ENCODE measurements at regions of chr2 and their contacts with region 1.

Region 1: GRCh38 chr2:32063310-32064161 is at the start of gene SPAST:
- DNase-seq: peak; percentile 96
- ATAC-seq: peak; percentile 95
- H3K4me3 Mint-ChIP-seq: peak within 1 kb of the TSS; percentile 98
- H3K27ac Mint-ChIP-seq: peak within 1 kb of the TSS; percentile 92
- H3K4me1 Mint-ChIP-seq: peaks cover 22% of the 10 kb centered on the region
- H3K27me3 Mint-ChIP-seq: peaks cover 4% of the 10 kb centered on the region
- total RNA-seq, gene SPAST: 18.8 to 19.2 TPM

Region 2: GRCh38 chr2:32039447-32040219 is 23.9 kb before region 1 on chr2 and contains the start of gene DPY30:
- POLR2A ChIA-PET with region 1: interaction called, 50 read pairs
- DNase-seq: peak; percentile 92
- ATAC-seq: peak; percentile 94
- H3K4me3 Mint-ChIP-seq: peak within 1 kb of the TSS; percentile 94
- H3K27ac Mint-ChIP-seq: peak within 1 kb of the TSS; percentile 96
- H3K4me1 Mint-ChIP-seq: peaks cover 10% of the 10 kb centered on the region
- H3K27me3 Mint-ChIP-seq: no peaks in the 10 kb centered on the region
- total RNA-seq, gene DPY30: 57.8 to 66.7 TPM

Region 3: DNA sequence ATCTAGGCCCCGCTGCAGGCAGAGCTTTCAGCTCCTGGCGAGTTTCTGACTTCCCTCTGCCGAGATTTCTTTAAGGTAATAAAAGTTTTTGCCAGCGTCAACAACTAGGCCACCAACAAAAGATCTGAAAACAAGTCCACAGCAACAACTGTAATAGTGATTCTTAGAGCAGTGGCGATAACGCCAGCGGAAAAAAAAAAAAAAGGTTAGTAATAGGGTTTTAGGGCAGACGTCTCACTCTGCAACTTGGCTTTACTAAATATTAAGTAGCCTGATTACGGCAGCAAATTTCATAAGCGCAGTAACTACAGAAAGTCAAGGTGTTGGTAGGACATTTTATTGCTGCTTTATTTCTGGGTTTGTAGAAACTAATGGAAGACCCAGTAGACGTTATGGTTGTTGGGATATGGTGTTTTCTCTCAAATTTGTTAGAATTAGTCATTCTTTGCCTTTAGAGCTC is 102.6 kb after region 1 on chr2:
- POLR2A ChIA-PET with region 1: interaction called, 18 read pairs
- DNase-seq: no peak
- ATAC-seq: no peak
- H3K4me3 Mint-ChIP-seq: peak overlapping the region; percentile 96
- H3K27ac Mint-ChIP-seq: peak overlapping the region; percentile 78
- H3K4me1 Mint-ChIP-seq: peaks cover 17% of the 10 kb centered on the region
- H3K27me3 Mint-ChIP-seq: no peaks in the 10 kb centered on the region

Region 4: DNA sequence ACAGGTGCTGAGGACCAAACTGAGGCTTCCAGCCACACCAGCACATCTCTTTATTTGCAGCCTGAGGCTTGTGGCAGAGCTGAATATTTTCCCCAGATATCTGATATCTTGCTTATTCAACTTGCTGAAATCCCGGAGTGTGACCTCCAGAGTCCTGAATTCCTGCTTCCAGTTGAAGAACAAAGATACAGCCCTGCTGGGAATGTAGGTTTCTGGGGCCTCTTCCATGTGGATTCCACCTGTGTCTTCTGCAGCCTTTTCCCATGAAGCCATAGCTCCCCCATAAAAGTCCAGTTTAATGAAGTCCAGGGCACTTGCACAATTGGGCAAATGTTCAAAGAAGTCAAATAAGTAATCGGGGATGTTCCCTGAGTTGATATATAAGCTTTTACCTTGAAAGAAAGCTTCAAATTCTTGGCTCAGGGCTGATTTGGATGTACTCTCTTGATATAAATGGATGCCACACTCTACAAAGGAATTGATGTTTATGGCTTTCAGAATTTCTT is 186.2 kb after region 1 on chr2:
- POLR2A ChIA-PET with region 1: no interaction called
- DNase-seq: no peak
- ATAC-seq: no peak
- H3K4me3 Mint-ChIP-seq: no peak overlapping the region
- H3K27ac Mint-ChIP-seq: no peak overlapping the region
- H3K4me1 Mint-ChIP-seq: no peaks in the 10 kb centered on the region
- H3K27me3 Mint-ChIP-seq: no peaks in the 10 kb centered on the region

Measured in activated naive CD8-positive, alpha-beta T cell treated with anti-CD3 and anti-CD28 coated beads, Interleukin-2, amount 10 ng/mL, durations not matched to agents 7 days and 5 days (primary cell).